Activated T-helper 1 cell treated with anti-CD3 and anti-CD28 coated beads, Interleukin-12 subunit alpha, Interleukin-12 subunit beta, Interleukin-2, Interleukin-4 antibody, amounts not matched to agents 30 ng/mL and 10 ng/mL and 1 ng/mL, durations not matched to agents 14 hours and 24 hours and 36 hours (primary cell): ENCODE measurements at regions of chr1 and their contacts with region 1.

Region 1: GRCh38 chr1:24111996-24112779 is at the start of gene MYOM3:
- DNase-seq: peak; percentile 35
- H3K4me3 Mint-ChIP-seq: no peak within 1 kb of the TSS
- H3K27ac Mint-ChIP-seq: no peak within 1 kb of the TSS
- H3K4me1 Mint-ChIP-seq: peaks cover 6% of the 10 kb centered on the region
- H3K27me3 Mint-ChIP-seq: peaks cover 26% of the 10 kb centered on the region
- total RNA-seq, gene MYOM3: not detected in 2 replicates

Region 2: DNA sequence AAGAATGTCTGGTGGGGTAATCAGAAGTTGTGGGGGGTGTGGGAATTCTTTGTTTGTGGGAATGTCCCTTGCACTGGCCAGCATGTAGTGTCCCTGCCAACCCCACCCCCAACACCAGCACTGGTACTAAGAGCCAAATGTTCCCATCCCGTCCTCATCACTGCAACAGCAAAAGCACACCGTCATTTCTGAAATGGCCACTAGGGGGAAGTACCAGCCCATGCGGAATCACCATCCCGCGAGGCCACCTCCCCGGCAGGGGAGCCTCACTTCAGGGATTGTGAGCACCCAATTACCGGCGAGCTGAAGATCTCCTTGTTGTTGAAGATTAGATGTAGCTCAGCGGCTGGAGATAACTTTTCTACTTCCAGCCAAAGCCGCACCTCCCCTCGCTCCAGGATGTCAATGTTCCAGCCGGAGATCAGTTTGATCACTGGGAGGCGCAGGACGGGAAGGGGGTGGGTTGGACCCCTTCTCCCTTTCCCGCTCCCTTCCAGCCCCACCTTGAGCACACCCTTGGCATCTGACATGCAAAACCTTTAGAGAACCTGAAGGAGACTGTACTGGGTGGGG is 41.3 kb before region 1 on chr1:
- intact Hi-C with region 1: loop called (anchors 1 kb)
- DNase-seq: peak; percentile 55
- H3K4me3 Mint-ChIP-seq: no peak overlapping the region
- H3K27ac Mint-ChIP-seq: no peak overlapping the region
- H3K4me1 Mint-ChIP-seq: no peaks in the 10 kb centered on the region
- H3K27me3 Mint-ChIP-seq: peaks cover 9% of the 10 kb centered on the region

Region 3: GRCh38 chr1:24206516-24207394 is 94.6 kb after region 1 on chr1:
- intact Hi-C with region 1: no loop called
- DNase-seq: no peak
- H3K4me3 Mint-ChIP-seq: no peak overlapping the region
- H3K27ac Mint-ChIP-seq: no peak overlapping the region
- H3K4me1 Mint-ChIP-seq: peaks cover 8% of the 10 kb centered on the region
- H3K27me3 Mint-ChIP-seq: peaks cover 11% of the 10 kb centered on the region